ENCODE measurements at regions of chr10 and their contacts with region 1.

Region 1: DNA sequence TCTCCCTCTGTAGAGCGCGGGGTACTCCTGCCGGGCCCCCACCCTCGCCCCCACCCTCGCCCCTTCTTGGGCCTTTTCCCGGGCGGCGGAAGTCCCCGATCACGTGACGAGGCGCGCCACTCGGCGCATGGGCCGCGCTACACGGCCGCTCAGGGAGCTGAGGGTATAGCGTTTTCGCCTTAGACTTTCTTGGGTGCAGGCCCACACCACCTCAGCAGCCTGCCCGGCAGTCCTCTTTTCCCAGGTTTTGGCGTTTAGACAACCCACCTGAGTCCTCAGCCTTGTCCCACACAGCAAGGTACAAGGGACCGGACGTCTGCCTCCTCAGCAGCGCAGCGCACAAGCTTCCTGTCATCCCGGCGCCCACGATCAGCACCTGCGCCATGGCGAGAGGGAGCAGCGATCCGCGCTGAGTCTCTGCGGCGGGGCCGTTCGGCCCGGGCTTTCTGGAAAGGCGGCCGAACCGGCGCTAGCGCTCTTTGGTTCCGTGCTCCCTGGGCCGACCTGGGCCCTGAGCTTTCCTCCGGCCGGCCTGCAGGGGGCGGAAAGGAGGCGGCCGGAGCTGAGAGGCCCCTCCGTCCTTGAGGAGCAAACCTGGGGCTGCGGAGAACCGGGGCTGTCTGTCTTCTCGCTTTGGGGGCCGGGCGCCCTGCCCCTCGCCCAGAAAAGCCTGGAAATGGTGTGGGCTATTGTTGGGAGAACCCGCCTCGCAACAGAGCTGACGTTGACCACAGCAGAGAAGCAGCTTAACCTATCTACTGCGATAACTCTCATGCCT is at the start of gene RNLS:
- DNase-seq: no peak
- H3K4me3 ChIP-seq: peak within 1 kb of the TSS; percentile 59
- CTCF ChIP-seq: peak; percentile 88

Region 2: DNA sequence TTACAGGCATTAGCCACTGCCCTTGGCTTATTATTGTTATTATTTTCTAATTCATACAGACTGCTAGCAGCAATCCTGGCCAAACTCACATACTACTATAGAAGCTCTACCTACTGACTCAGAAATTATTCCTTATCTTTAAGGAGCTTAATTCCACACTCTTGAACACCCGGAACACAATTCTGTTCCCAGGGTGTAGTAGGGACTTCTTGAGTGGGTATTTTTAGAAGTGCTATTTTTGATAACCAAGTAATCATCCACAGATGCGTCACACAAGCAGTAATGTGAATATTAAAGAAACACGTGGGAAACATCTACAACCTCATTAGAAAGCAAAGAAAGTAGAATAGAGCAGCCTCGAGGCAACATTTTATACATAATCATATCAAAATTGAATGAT is 570.4 kb before region 1 on chr10:
- CTCF ChIA-PET with region 1: no interaction called
- POLR2A ChIA-PET with region 1: no interaction called
- DNase-seq: peak; percentile 7
- H3K4me3 ChIP-seq: no peak overlapping the region
- CTCF ChIP-seq: no peak

Region 3: GRCh38 chr10:88456730-88457129 is 126.3 kb before region 1 on chr10:
- CTCF ChIA-PET with region 1: no interaction called
- POLR2A ChIA-PET with region 1: no interaction called
- DNase-seq: no peak
- H3K4me3 ChIP-seq: no peak overlapping the region
- CTCF ChIP-seq: no peak

Region 4: GRCh38 chr10:88565072-88565471 is 17.9 kb before region 1 on chr10:
- CTCF ChIA-PET with region 1: interaction called, 50 read pairs
- POLR2A ChIA-PET with region 1: no interaction called
- DNase-seq: no peak
- H3K4me3 ChIP-seq: no peak overlapping the region
- CTCF ChIP-seq: peak; percentile 14

Region 5: DNA sequence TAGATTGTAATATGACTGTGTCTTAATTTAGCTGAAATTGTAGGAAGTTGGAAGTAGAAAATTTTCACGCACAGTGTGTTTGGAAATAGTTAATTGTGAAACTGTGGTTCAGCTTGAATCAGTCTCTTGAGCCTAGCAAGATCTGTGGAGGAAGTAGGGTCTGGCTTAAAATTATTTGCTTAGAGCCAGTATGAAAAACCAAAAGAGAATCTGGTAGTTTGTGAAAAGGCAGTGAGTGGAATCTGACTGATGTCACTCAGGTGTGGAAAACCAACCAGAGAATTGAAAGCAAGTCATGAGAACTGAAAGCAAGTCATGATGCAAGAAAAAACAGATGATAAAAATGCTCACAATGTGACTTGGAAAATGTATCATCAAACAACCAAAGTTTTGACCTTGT is 15.1 kb after region 1 on chr10:
- CTCF ChIA-PET with region 1: interaction called, 27 read pairs
- POLR2A ChIA-PET with region 1: no interaction called
- DNase-seq: no peak
- H3K4me3 ChIP-seq: no peak overlapping the region
- CTCF ChIP-seq: no peak

Measured in AG04449 (cell line).